OCI-LY7 (cell line): ENCODE measurements at regions of chr6 and their contacts with region 1.

Region 1: GRCh38 chr6:126339796-126340609 is at the start of gene CENPW:
- DNase-seq: peak; percentile 95
- H3K4me3 ChIP-seq: peak within 1 kb of the TSS; percentile 87
- H3K27ac ChIP-seq: peak within 1 kb of the TSS; percentile 87
- H3K4me1 ChIP-seq: peaks cover 20% of the 10 kb centered on the region
- CTCF ChIP-seq: peak; percentile 41
- total RNA-seq, gene CENPW: 22.1 and 28.6 TPM in 2 replicates

Region 2: DNA sequence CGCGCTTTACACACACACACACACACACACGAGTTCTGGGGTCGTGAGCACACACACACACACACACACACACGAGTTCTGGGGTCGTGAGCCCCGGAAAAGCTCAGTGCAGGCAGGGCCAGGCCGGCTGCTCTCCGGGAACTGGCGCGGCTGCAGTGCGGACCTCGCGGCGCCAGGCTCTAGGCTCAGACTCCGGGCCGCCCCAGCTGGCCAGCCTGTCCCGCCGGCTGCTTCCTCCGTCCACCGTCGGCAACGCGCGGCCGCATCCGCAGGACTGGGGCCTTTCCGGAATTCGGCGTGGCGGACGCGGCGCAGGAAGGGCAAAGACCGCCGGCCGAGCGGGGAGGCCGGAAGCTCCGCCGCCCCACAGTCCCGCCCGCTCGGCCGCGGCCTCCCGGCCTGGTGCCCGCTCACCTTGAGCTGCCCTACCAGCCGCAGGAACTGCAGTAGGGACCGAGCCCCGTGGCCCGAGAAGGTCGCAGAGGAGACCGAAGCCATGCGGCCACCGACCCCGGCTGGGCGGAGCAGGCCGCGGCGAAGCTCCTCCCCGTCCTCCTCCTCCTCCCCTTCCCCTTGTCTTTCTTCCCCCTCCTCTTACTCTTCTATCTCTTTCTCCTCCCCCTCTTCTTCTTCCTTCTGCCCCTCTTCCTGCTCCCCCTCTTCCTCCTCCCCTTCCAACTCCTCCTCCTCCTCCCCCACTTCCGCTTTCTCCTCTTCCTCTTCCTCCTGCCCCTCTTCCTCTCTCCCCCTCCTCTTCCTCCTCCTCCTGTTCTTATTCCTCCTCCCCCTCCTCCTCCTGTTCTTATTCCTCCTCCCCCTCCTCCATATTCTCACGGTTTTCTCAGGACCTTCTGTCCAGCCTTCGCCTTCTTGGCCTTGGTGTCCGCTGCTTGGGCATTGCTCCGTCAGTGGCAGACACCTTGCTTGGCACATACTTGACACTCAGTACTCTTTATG is 1038.3 kb before region 1 on chr6 and contains the start of gene HDDC2:
- CTCF ChIA-PET with region 1: no interaction called
- POLR2A ChIA-PET with region 1: no interaction called
- intact Hi-C with region 1: loop called (anchors 10 kb)
- DNase-seq: peak; percentile 71
- H3K4me3 ChIP-seq: peak within 1 kb of the TSS; percentile 83
- H3K27ac ChIP-seq: peak within 1 kb of the TSS; percentile 52
- H3K4me1 ChIP-seq: peaks cover 29% of the 10 kb centered on the region
- CTCF ChIP-seq: no peak
- total RNA-seq, gene HDDC2: 75.1 and 88.6 TPM in 2 replicates

Region 3: GRCh38 chr6:125995972-125996580 is 343.9 kb before region 1 on chr6:
- CTCF ChIA-PET with region 1: no interaction called
- POLR2A ChIA-PET with region 1: no interaction called
- intact Hi-C with region 1: loop called (anchors 5 kb)
- DNase-seq: peak; percentile 81
- H3K4me3 ChIP-seq: peak overlapping the region; percentile 42
- H3K27ac ChIP-seq: no peak overlapping the region
- H3K4me1 ChIP-seq: peaks cover 6% of the 10 kb centered on the region
- CTCF ChIP-seq: peak; percentile 100

Region 4: GRCh38 chr6:127266178-127266891 is 926.3 kb after region 1 on chr6 and contains the start of gene RNF146:
- CTCF ChIA-PET with region 1: no interaction called
- POLR2A ChIA-PET with region 1: no interaction called
- intact Hi-C with region 1: loop called (anchors 2 kb)
- DNase-seq: peak; percentile 85
- H3K4me3 ChIP-seq: peak within 1 kb of the TSS; percentile 76
- H3K27ac ChIP-seq: peak within 1 kb of the TSS; percentile 95
- H3K4me1 ChIP-seq: peaks cover 19% of the 10 kb centered on the region
- CTCF ChIP-seq: peak; percentile 86
- total RNA-seq, gene RNF146: 11.1 and 16.2 TPM in 2 replicates